ENCODE measurements at regions of chrX and their contacts with region 1.

Region 1: DNA sequence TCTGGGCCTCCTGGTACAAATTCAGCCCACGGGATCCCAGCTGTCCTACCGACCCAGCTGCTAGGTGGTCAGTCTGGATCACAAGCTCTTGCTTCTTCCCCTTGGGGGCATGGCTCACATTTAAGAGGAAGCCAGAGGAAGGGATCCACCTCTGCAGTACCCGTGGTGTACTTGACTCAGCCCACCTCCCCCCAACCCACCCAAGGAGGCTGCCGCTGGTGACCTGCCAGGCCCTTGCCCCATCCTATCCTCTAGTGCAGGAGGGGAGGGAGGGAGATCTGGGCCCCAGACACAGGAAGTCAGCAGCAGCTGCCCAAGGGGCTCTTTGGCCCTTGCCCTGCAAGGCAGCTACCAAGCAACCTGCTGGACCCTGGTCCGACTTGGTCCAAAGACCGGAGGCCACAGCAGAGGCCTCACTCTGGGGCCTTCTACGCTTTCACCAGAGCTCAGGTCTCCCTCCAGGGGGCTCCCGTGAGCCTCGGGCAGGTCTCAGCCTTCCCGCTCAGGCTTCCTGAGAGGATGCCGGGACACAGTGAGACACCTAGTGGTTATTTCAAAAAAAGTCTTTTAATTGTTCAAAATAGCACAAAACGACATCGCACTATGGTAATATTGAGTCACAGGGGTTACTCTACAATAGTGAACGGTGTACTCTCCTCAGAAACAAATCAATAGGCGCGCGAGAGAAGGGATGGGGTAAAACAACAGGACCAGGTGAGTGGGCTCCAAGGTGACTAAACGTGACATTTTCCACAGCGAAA is 2.7 kb upstream of the RENBP start:
- DNase-seq: peak; percentile 58 to 86
- H3K4me3 ChIP-seq: no peak overlapping the region
- H3K27ac ChIP-seq: no peak overlapping the region
- H3K4me1 ChIP-seq: no peaks in the 10 kb centered on the region
- H3K27me3 ChIP-seq: no peaks in the 10 kb centered on the region
- CTCF ChIP-seq: peak; percentile 83

Region 2: DNA sequence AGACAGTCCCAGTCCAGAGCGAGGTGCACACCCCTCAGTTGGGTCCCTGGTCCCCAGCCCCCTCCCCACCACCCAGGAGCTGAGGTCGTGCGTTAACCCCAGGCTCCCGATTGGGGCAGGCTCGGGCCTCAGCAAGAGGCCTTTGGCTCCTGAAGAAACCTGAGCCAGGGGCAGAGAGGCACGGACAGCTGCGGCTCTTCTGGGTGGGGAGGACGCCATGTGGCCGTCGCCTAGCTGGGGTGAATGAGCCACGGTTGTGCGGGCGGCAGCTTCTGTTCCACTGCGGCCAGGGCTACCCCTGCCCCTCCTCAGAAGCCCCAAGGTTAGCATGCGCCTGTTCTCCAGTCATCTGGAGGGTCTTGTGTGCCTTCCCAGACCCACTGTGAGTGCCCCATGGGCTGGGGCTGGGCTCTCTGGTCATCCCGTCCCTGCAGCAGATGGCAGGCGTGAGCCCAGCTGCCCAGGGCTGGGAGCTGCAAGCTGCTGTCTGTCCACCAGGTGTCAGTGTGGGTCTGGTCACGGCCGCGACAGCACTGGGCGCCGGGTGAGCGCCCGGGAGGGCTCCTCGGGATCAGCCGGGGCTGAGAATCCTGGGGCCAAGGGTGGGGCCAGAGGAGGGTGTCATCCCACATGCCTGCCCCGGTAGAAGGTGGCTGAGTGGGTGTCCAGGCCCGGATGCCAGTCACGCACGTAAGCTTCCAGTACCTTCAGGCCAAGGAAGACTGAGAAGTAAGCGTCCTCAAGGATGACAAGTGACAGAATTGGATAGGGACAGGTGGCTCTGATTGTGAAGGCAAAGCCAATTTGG is 407.8 kb before region 1 on chrX:
- CTCF ChIA-PET with region 1: no interaction called
- POLR2A ChIA-PET with region 1: no interaction called
- intact Hi-C with region 1: loop called (anchors 1 kb)
- DNase-seq: peak in 1 of 2 experiments; percentile 81
- H3K4me3 ChIP-seq: no peak overlapping the region
- H3K27ac ChIP-seq: no peak overlapping the region
- H3K4me1 ChIP-seq: no peaks in the 10 kb centered on the region
- H3K27me3 ChIP-seq: peaks cover 25% of the 10 kb centered on the region; the same call in 1 of the 2 replicates
- CTCF ChIP-seq: peak; percentile 83

Region 3: GRCh38 chrX:153763989-153764755 is 183.0 kb before region 1 on chrX and contains the start of gene PLXNB3:
- CTCF ChIA-PET with region 1: interaction called, 4 read pairs
- POLR2A ChIA-PET with region 1: no interaction called
- intact Hi-C with region 1: loop called (anchors 1 kb)
- DNase-seq: peak; percentile 68 to 95
- H3K4me3 ChIP-seq: peak within 1 kb of the TSS; percentile 52; the same call in 1 of the 2 replicates
- H3K27ac ChIP-seq: no peak within 1 kb of the TSS
- H3K4me1 ChIP-seq: peaks cover 7% of the 10 kb centered on the region; the same call in 1 of the 2 replicates
- H3K27me3 ChIP-seq: no peaks in the 10 kb centered on the region
- CTCF ChIP-seq: peak; percentile 86
- total RNA-seq, gene PLXNB3: 39.4 and 41.4 TPM in 2 replicates

Region 4: DNA sequence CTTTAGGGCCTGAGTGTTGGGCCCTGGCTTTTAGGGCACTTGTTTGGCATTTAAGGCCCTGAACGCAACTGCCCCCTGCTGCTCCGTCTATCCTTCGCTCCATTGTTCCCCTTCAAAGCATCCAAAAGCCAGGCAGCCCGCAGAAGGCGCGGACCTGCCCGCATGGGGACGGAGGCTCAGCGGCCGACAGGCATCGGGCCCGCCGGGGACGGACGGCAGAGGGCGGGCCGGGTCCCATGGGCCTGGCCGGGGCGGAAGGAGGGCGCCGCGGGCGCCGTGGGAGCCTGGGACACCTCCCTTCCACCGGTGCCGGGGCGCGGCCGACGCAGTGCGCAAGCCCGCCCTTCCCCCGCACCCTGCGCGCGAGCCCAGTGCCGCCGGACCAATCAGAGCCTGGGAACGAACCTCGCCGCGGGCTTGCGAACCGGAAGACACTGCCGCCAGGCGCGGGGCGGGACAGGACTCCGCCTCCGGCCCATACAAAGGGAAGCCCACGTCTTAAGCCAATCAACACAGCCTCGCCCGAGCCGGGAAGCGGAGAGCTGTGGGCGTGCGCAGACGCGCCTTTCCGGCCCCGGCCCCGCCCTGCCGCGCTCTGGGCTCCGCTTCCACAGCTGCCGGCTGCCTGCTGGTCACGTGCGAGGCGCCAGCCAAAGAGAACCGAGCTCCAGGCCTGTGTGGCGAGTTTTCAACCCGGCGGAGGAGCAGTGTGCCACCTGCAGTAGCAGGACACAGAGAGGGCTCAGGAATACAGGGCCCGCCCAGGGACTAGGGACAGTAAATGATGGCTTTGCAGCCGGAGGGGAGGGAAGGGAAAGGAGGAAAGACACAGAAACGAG is 19.0 kb before region 1 on chrX:
- CTCF ChIA-PET with region 1: interaction called, 8 read pairs
- POLR2A ChIA-PET with region 1: no interaction called
- intact Hi-C with region 1: loop called (anchors 1 kb)
- DNase-seq: peak; percentile 92 to 99
- H3K4me3 ChIP-seq: peak overlapping the region; percentile 86
- H3K27ac ChIP-seq: peak overlapping the region; percentile 86
- H3K4me1 ChIP-seq: peaks cover 17% of the 10 kb centered on the region; the same call in 1 of the 2 replicates
- H3K27me3 ChIP-seq: no peaks in the 10 kb centered on the region
- CTCF ChIP-seq: no peak; the same call in 1 of the 2 replicates

Region 5: GRCh38 chrX:154490414-154491083 is 543.4 kb after region 1 on chrX and contains the start of gene SLC10A3:
- CTCF ChIA-PET with region 1: no interaction called
- POLR2A ChIA-PET with region 1: interaction called, 20 read pairs
- intact Hi-C with region 1: no loop called
- DNase-seq: peak; percentile 87 to 97
- H3K4me3 ChIP-seq: peak within 1 kb of the TSS; percentile 66
- H3K27ac ChIP-seq: peak within 1 kb of the TSS; percentile 68
- H3K4me1 ChIP-seq: peaks cover 14% of the 10 kb centered on the region; the same call in 1 of the 2 replicates
- H3K27me3 ChIP-seq: no peaks in the 10 kb centered on the region
- CTCF ChIP-seq: no peak
- total RNA-seq, gene SLC10A3: 38.3 and 54.9 TPM in 2 replicates